ENCODE measurements at regions of chr15 and their contacts with region 1.

Region 1: DNA sequence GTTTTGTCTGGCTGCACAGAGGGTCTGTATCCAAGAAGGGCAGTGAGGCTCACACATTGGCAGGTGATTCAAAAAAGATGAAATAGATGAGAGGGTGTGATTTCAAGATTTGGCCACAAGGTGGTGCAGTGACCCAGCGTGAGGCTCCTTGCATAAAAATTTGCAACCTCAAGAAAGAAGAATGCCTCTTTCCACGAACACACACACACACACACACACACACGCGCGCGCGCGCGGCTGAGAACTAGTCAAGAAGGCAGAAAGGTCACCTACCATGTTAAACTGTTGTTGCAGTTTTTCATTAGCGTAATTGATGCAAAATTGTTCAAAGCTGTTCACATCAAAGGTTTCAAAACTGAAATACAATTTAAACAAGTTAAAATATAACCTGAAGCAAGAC is 39.2 kb downstream of the MYO5C start:
- DNase-seq: peak; percentile 27 to 80 (median 75)
- ATAC-seq: peak; percentile 98
- H3K4me3 ChIP-seq: peak overlapping the region; percentile 14
- H3K4me3 Mint-ChIP-seq: peak overlapping the region; percentile 49 to 85 (median 72)
- H3K27ac ChIP-seq: no peak overlapping the region
- H3K27ac Mint-ChIP-seq: peak overlapping the region; percentile 4 to 96 (median 65)
- H3K4me1 ChIP-seq: peaks cover 0 to 12% of the 10 kb centered on the region in 2 donors
- H3K4me1 Mint-ChIP-seq: peaks cover 5 to 55% (median 17%) of the 10 kb centered on the region in 7 donors
- H3K27me3 ChIP-seq: no peaks in the 10 kb centered on the region
- H3K27me3 Mint-ChIP-seq: no peaks in the 10 kb centered on the region

Region 2: GRCh38 chr15:52171386-52171785 is 85.0 kb before region 1 on chr15:
- CTCF ChIA-PET with region 1: no interaction called
- POLR2A ChIA-PET with region 1: no interaction called
- intact Hi-C with region 1: no loop called
- DNase-seq: peak in 5 of 9 donors; percentile 28 to 41 (median 31)
- ATAC-seq: peak; percentile 73
- H3K4me3 ChIP-seq: no peak overlapping the region
- H3K4me3 Mint-ChIP-seq: peak overlapping the region in 7 of 10 donors; percentile 18 to 71 (median 46)
- H3K27ac ChIP-seq: no peak overlapping the region
- H3K27ac Mint-ChIP-seq: peak overlapping the region in 8 of 9 donors; percentile 2 to 74 (median 43)
- H3K4me1 ChIP-seq: peaks cover 8 to 15% of the 10 kb centered on the region in 2 donors
- H3K4me1 Mint-ChIP-seq: peaks cover 27 to 71% (median 54%) of the 10 kb centered on the region in 7 donors
- H3K27me3 ChIP-seq: no peaks in the 10 kb centered on the region
- H3K27me3 Mint-ChIP-seq: peaks cover 0 to 2% (median 0%) of the 10 kb centered on the region in 5 donors

Region 3: DNA sequence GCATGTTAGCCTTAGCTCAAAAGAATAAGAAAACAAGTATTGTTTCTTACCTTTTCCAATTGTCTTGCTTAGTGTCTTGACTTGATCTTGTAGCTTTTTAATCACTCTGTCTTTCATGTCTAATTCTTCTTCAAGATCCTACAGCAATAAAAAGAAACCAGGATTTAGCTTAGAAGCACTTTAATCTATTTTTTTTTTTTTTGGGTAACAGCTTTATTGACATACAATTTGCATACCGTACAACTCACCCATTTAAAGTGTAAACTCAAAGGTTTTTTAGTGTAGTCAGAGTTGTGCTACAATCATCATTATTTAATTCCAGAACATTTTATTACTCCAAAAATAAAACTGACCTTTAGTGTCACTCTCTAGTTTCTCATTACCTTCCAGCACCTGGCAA is 41.8 kb before region 1 on chr15:
- CTCF ChIA-PET with region 1: no interaction called
- POLR2A ChIA-PET with region 1: no interaction called
- intact Hi-C with region 1: no loop called
- DNase-seq: no peak
- ATAC-seq: no peak
- H3K4me3 ChIP-seq: no peak overlapping the region
- H3K4me3 Mint-ChIP-seq: no peak overlapping the region
- H3K27ac ChIP-seq: no peak overlapping the region
- H3K27ac Mint-ChIP-seq: no peak overlapping the region
- H3K4me1 ChIP-seq: peaks cover 0 to 5% of the 10 kb centered on the region in 2 donors
- H3K4me1 Mint-ChIP-seq: peaks cover 0 to 12% (median 0%) of the 10 kb centered on the region in 7 donors
- H3K27me3 ChIP-seq: no peaks in the 10 kb centered on the region
- H3K27me3 Mint-ChIP-seq: no peaks in the 10 kb centered on the region

Region 4: DNA sequence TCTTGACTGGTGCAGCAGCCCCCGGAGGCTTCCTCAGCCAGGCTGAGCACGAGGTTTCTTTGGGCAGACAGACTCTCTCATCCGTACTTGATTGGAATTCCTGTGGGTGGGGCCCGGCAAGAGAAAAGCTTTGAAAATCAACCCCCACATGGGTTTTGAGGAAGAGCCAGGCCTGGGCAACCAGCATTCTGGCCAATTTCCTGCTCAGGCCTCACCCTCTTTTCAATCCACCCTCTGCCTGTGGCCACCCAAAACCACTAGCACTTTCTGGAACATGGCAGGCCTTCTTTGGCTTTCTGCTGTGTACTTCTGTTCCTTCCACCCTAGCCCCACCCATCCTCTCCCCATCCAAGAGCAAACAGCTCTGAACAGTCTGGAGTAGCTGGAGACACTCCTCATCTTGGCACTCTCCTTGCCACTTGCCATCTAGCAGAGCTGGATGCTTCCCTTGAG is 33.3 kb after region 1 on chr15:
- CTCF ChIA-PET with region 1: no interaction called
- POLR2A ChIA-PET with region 1: no interaction called
- intact Hi-C with region 1: loop called in 1 of 2 experiments (anchors 2 kb)
- DNase-seq: no peak
- ATAC-seq: no peak
- H3K4me3 ChIP-seq: no peak overlapping the region
- H3K4me3 Mint-ChIP-seq: no peak overlapping the region
- H3K27ac ChIP-seq: no peak overlapping the region
- H3K27ac Mint-ChIP-seq: peak overlapping the region in 1 of 9 donors; percentile 56
- H3K4me1 ChIP-seq: no peaks in the 10 kb centered on the region
- H3K4me1 Mint-ChIP-seq: peaks cover 0 to 33% (median 3%) of the 10 kb centered on the region in 7 donors
- H3K27me3 ChIP-seq: peaks cover 0 to 3% of the 10 kb centered on the region in 2 donors
- H3K27me3 Mint-ChIP-seq: peaks cover 21 to 27% (median 23%) of the 10 kb centered on the region in 5 donors

Region 5: DNA sequence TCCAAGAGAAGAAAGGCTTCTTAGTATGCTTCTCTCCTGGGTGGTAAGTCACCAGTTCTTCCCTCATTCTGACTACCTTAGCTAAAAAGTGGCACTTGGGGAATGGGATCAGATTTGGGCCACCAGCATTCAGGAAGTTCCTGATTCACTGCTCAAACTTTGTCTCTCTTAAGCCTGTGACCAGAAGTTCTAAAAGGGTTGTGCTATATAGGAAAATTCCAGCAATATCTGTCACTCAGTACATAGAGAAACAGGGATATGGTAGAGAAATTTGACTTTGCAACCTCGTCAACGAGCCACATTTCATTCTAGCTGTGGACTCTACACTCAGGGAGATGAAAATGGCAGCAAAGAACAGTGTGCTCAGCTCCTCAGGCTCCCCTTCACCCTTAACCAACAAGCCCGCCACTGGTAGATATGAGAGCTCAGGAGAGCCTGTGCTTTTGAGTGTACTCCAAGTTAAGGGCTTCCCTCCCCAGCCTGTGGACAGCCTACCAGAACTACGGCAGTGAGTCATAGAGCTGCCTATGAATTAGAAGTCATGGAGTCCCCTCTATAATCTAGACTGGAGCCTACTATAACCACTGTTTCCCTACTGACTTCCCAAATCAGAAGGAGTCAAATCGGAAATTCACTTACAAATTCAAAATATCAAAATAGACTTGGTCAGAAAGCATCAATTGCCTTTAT is 91.8 kb after region 1 on chr15:
- CTCF ChIA-PET with region 1: no interaction called
- POLR2A ChIA-PET with region 1: no interaction called
- intact Hi-C with region 1: no loop called
- DNase-seq: no peak
- ATAC-seq: no peak
- H3K4me3 ChIP-seq: no peak overlapping the region
- H3K4me3 Mint-ChIP-seq: no peak overlapping the region
- H3K27ac ChIP-seq: no peak overlapping the region
- H3K27ac Mint-ChIP-seq: no peak overlapping the region
- H3K4me1 ChIP-seq: no peaks in the 10 kb centered on the region
- H3K4me1 Mint-ChIP-seq: peaks cover 0 to 11% (median 0%) of the 10 kb centered on the region in 7 donors
- H3K27me3 ChIP-seq: no peaks in the 10 kb centered on the region
- H3K27me3 Mint-ChIP-seq: no peaks in the 10 kb centered on the region

Region 6: GRCh38 chr15:52464478-52464877 is 208.1 kb after region 1 on chr15:
- CTCF ChIA-PET with region 1: interaction called, 3 read pairs
- POLR2A ChIA-PET with region 1: no interaction called
- intact Hi-C with region 1: loop called in 1 of 2 experiments (anchors 5 kb)
- DNase-seq: no peak
- ATAC-seq: peak; percentile 56
- H3K4me3 ChIP-seq: no peak overlapping the region
- H3K4me3 Mint-ChIP-seq: peak overlapping the region in 4 of 10 donors; percentile 3 to 82 (median 33)
- H3K27ac ChIP-seq: no peak overlapping the region
- H3K27ac Mint-ChIP-seq: peak overlapping the region; percentile 21 to 85 (median 66)
- H3K4me1 ChIP-seq: peaks cover 0 to 33% of the 10 kb centered on the region in 2 donors
- H3K4me1 Mint-ChIP-seq: peaks cover 24 to 44% (median 38%) of the 10 kb centered on the region in 7 donors
- H3K27me3 ChIP-seq: no peaks in the 10 kb centered on the region
- H3K27me3 Mint-ChIP-seq: no peaks in the 10 kb centered on the region

Region 7: GRCh38 chr15:52735231-52736089 is 479.1 kb after region 1 on chr15:
- CTCF ChIA-PET with region 1: interaction called, 113 read pairs
- POLR2A ChIA-PET with region 1: interaction called, 4 read pairs
- intact Hi-C with region 1: loop called (anchors 1 kb)
- DNase-seq: peak; percentile 22 to 83 (median 73)
- ATAC-seq: peak; percentile 90
- H3K4me3 ChIP-seq: no peak overlapping the region
- H3K4me3 Mint-ChIP-seq: no peak overlapping the region
- H3K27ac ChIP-seq: no peak overlapping the region
- H3K27ac Mint-ChIP-seq: peak overlapping the region in 3 of 9 donors; percentile 2 to 75 (median 55)
- H3K4me1 ChIP-seq: peaks cover under 1 to 4% of the 10 kb centered on the region in 2 donors
- H3K4me1 Mint-ChIP-seq: peaks cover 0 to 25% (median 7%) of the 10 kb centered on the region in 7 donors
- H3K27me3 ChIP-seq: no peaks in the 10 kb centered on the region
- H3K27me3 Mint-ChIP-seq: peaks cover 0 to 12% (median 3%) of the 10 kb centered on the region in 5 donors

Measured in naive thymus-derived CD4-positive, alpha-beta T cell (primary cell).